Posterior vena cava (tissue), 2 donors: ENCODE measurements at regions of chr4 and their contacts with region 1.

Region 1: DNA sequence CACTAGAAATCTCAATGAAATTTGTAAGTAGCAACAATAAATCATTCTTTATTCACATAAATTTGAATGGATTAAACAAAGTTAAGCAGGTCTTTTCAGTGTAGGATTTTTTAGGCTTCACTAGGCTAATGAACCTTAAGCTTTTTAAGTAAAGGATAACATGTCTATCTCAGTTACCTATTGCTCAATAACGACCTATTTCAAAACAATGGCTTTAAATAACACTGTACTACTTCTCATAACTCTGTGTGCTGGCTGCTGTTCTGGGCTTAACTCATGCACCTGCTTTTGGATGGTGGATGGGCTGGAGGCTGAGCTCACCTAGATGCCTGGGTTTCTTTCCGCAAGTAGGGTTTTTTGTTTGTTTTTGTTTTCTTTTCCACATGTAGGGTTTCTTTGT is 495.0 kb upstream of the SLIT2 start:
- DNase-seq: no peak

Region 2: DNA sequence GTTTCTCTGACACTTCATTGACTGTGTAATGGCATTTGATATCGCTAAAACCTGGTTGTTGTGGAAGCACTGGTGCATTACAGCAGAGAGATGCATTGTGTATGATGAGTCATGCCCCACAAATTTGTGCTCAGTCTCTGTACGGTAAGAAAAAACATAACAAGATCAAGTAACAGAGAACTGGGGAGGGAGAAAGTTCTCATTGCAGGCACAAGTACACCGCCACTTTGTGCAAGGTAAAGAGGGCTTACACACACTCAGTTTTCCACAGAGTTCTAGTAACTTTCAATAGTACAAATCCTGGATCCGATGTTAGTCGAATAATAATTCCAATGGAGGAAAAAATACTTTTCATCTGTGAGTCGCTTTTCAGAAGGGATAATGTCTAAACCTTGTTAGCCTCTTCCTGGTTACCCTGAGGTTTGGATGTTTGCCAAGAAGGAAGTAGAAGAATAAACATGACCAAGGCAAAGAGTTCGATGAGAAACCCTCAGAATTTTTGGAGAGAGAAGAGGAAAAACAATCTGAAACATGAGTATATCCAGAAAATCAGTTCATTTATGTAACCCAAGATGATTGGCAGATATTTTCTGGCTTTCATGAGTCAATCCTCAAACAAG is 17.4 kb before region 1 on chr4:
- intact Hi-C with region 1: loop called in 1 of 2 experiments (anchors 1 kb)
- DNase-seq: no peak

Region 3: GRCh38 chr4:20431543-20431951 is 674.9 kb after region 1 on chr4:
- intact Hi-C with region 1: no loop called
- DNase-seq: peak; percentile 67